Activated CD4-positive, alpha-beta memory T cell treated with anti-CD3 and anti-CD28 coated beads for 36 hours (primary cell): ENCODE measurements at regions of chr18 and their contacts with region 1.

Region 1: DNA sequence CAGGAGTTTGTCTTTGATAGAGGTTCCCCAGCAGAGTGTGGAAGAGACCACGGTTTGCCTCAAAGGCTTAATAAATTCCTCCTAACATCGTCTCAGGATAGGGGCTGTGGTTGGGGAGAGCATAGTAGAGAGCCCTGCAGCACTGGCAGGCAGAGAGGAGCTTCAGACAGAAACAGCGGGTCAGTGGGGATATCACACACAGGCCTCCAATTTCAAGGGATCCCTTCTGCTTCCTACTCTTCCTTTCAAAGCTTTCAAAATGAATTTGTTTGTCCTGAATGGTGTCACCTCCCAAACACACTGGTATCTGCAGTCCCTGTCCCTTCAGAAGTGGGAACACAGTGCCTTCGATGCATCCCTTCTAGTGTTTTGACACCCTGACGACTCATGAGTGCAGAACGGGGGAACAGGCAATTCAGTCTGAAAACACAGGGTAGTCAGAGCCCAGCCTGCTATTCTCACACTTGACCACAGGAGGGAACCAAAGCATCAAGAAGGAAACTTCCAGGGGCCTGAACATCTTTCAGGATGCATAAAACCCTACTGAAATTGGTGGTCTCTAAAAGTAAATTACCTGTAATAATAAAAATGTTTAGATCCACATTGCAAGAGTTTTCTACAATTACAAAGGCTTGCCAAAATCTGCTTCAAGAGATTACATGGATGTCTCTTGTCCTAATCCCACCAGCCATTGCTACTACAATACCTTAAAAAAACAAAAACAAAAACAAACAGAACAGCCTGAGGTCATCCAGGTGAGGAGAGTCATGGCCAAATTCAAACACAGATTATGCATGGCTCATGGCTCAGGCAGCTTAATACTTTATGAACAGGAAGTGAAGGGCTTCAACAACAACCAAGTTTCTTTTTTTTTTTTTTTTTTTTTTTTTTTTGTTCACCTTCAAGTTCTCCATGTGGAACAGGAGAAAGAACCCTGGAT is 49.8 kb downstream of the SLC14A2 start:
- DNase-seq: peak; percentile 76
- H3K4me3 Mint-ChIP-seq: no peak overlapping the region
- H3K27ac Mint-ChIP-seq: peak overlapping the region; percentile 43
- H3K4me1 Mint-ChIP-seq: peaks cover 51% of the 10 kb centered on the region
- H3K27me3 Mint-ChIP-seq: no peaks in the 10 kb centered on the region

Region 2: DNA sequence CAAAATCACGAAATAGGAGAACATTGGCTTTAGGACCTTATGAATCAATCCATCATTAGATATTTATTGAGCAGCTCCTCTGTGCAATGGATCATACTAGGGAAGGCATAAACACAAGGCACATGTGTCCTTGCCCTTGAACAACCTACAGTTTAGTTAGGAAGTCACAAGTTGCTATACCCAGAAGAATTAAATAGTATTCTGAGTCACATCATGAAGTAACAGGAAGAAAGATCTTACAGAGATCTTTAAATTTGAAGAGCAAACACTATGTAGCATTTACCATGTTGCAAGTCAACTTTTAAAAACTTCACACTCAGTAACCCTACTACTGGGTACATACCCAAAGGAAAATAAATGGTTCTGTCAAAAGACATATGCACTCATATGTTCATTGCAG is 405.0 kb before region 1 on chr18:
- CTCF ChIA-PET with region 1: no interaction called
- POLR2A ChIA-PET with region 1: no interaction called
- intact Hi-C with region 1: no loop called
- DNase-seq: no peak
- H3K4me3 Mint-ChIP-seq: no peak overlapping the region
- H3K27ac Mint-ChIP-seq: no peak overlapping the region
- H3K4me1 Mint-ChIP-seq: no peaks in the 10 kb centered on the region
- H3K27me3 Mint-ChIP-seq: peaks cover 6% of the 10 kb centered on the region

Region 3: GRCh38 chr18:45608400-45608799 is 56.7 kb before region 1 on chr18:
- CTCF ChIA-PET with region 1: no interaction called
- POLR2A ChIA-PET with region 1: no interaction called
- intact Hi-C with region 1: no loop called
- DNase-seq: no peak
- H3K4me3 Mint-ChIP-seq: no peak overlapping the region
- H3K27ac Mint-ChIP-seq: no peak overlapping the region
- H3K4me1 Mint-ChIP-seq: no peaks in the 10 kb centered on the region
- H3K27me3 Mint-ChIP-seq: peaks cover 14% of the 10 kb centered on the region

Region 4: GRCh38 chr18:45628968-45629958 is 35.8 kb before region 1 on chr18:
- CTCF ChIA-PET with region 1: no interaction called
- POLR2A ChIA-PET with region 1: no interaction called
- intact Hi-C with region 1: no loop called
- DNase-seq: no peak
- H3K4me3 Mint-ChIP-seq: no peak overlapping the region
- H3K27ac Mint-ChIP-seq: no peak overlapping the region
- H3K4me1 Mint-ChIP-seq: peaks cover 5% of the 10 kb centered on the region
- H3K27me3 Mint-ChIP-seq: no peaks in the 10 kb centered on the region

Region 5: GRCh38 chr18:45652303-45653080 is 12.6 kb before region 1 on chr18:
- CTCF ChIA-PET with region 1: interaction called, 12 read pairs
- POLR2A ChIA-PET with region 1: no interaction called
- intact Hi-C with region 1: no loop called
- DNase-seq: no peak
- H3K4me3 Mint-ChIP-seq: no peak overlapping the region
- H3K27ac Mint-ChIP-seq: no peak overlapping the region
- H3K4me1 Mint-ChIP-seq: peaks cover 18% of the 10 kb centered on the region
- H3K27me3 Mint-ChIP-seq: peaks cover 2% of the 10 kb centered on the region

Region 6: DNA sequence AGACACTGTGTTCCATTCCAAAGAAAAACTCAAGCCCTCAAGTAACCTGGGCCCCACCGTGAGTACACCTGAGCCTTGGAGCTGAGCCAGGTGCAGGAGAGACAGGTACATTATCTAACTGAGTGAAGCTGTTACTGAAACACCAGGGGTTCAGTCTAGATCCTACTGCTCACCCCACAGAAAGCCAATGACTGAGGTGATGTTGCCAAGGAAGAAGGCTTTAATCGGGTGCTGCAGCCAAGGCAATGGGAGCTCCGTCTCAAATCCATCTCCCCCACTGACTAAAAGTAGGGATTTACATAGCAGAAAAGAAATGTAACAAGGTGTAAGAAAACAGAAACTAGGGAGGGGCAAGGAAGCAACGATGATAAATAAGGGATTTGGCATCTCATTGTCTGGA is 43.7 kb after region 1 on chr18:
- CTCF ChIA-PET with region 1: no interaction called
- POLR2A ChIA-PET with region 1: no interaction called
- intact Hi-C with region 1: loop called (anchors 1 kb)
- DNase-seq: no peak
- H3K4me3 Mint-ChIP-seq: no peak overlapping the region
- H3K27ac Mint-ChIP-seq: no peak overlapping the region
- H3K4me1 Mint-ChIP-seq: no peaks in the 10 kb centered on the region
- H3K27me3 Mint-ChIP-seq: no peaks in the 10 kb centered on the region

Region 7: GRCh38 chr18:45730832-45731575 is 65.9 kb after region 1 on chr18:
- CTCF ChIA-PET with region 1: interaction called, 10 read pairs
- POLR2A ChIA-PET with region 1: no interaction called
- intact Hi-C with region 1: no loop called
- DNase-seq: no peak
- H3K4me3 Mint-ChIP-seq: no peak overlapping the region
- H3K27ac Mint-ChIP-seq: no peak overlapping the region
- H3K4me1 Mint-ChIP-seq: no peaks in the 10 kb centered on the region
- H3K27me3 Mint-ChIP-seq: no peaks in the 10 kb centered on the region

Region 8: GRCh38 chr18:45839414-45840395 is 174.6 kb after region 1 on chr18:
- CTCF ChIA-PET with region 1: interaction called, 20 read pairs
- POLR2A ChIA-PET with region 1: no interaction called
- intact Hi-C with region 1: loop called (anchors 2 kb)
- DNase-seq: peak; percentile 48
- H3K4me3 Mint-ChIP-seq: no peak overlapping the region
- H3K27ac Mint-ChIP-seq: no peak overlapping the region
- H3K4me1 Mint-ChIP-seq: peaks cover 7% of the 10 kb centered on the region
- H3K27me3 Mint-ChIP-seq: peaks cover 29% of the 10 kb centered on the region

Region 9: DNA sequence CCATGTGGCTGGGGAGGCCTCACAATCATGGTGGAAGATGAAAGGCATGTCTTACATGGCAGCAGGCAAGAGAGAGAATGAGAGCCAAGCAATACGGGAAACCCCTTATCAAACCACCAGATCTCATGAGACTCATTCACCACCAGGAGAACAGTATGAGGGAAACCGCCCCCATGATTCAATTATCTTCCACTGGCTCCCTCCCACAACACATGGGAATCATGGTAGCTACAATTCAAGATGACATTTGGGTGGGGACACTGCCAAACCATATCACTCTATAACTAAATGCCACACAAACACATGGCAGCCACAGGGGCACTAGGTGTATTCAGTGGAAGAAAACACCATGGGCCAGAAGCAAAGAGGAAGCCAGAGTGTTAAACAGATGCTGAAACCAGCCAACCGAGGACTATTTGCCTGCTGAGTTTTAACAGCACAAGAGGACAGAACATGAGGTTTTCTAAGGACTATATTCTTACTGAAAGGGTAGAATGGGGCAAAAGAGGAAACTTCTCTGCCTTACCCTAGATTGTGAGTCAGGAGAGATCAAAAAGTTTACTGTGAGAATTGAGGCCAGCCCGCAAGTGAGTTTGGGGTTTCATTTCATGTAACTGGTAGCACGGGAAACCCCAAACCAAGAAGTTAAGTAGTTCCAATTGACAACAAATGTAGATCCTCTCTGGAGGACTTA is 209.5 kb after region 1 on chr18:
- CTCF ChIA-PET with region 1: interaction called, 199 read pairs
- POLR2A ChIA-PET with region 1: no interaction called
- intact Hi-C with region 1: loop called (anchors 1 kb)
- DNase-seq: peak; percentile 87
- H3K4me3 Mint-ChIP-seq: peak overlapping the region; percentile 1
- H3K27ac Mint-ChIP-seq: peak overlapping the region; percentile 94
- H3K4me1 Mint-ChIP-seq: peaks cover 31% of the 10 kb centered on the region
- H3K27me3 Mint-ChIP-seq: no peaks in the 10 kb centered on the region

Region 10: GRCh38 chr18:45910405-45911023 is 245.4 kb after region 1 on chr18:
- CTCF ChIA-PET with region 1: interaction called, 29 read pairs
- POLR2A ChIA-PET with region 1: no interaction called
- intact Hi-C with region 1: loop called (anchors 1 kb)
- DNase-seq: peak; percentile 72
- H3K4me3 Mint-ChIP-seq: no peak overlapping the region
- H3K27ac Mint-ChIP-seq: no peak overlapping the region
- H3K4me1 Mint-ChIP-seq: no peaks in the 10 kb centered on the region
- H3K27me3 Mint-ChIP-seq: no peaks in the 10 kb centered on the region